A673 (cell line): ENCODE measurements at regions of chr3 and their contacts with region 1.

Region 1: DNA sequence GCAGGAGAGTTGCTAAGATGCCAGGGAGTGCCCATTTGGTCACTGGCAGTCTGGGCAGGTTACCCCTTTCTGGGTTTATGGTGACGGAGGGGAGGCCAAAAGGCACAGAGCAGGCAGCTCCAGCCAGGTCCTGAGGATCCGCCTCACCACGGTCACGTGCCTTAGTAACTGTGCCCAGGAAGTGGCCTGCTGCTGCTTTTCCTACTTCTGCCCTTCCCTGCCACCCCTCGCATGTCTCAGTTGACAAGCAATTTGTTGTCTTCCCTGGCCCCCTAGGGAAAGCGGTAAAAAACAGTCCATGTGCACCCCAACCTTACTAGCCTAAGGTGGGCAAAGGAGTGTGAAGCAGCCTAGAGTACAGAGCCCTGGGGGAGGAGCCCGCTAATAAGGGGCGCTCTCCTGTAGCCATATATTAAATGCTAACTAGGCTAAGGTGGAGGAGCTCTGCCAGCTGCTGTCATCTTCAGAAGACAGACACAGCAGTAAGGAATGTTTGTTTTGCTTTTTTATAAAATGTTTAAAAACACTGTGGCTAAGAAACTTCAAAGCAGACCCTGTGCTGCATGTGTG is 9.1 kb upstream of the LIPH start:
- DNase-seq: no peak
- H3K4me3 ChIP-seq: no peak overlapping the region
- H3K27ac ChIP-seq: no peak overlapping the region
- H3K4me1 ChIP-seq: no peaks in the 10 kb centered on the region
- H3K27me3 ChIP-seq: no peaks in the 10 kb centered on the region
- CTCF ChIP-seq: no peak

Region 2: GRCh38 chr3:185460719-185461350 is 100.6 kb before region 1 on chr3:
- CTCF ChIA-PET with region 1: interaction called, 11 read pairs
- POLR2A ChIA-PET with region 1: no interaction called
- intact Hi-C with region 1: no loop called
- DNase-seq: peak; percentile 56
- H3K4me3 ChIP-seq: no peak overlapping the region
- H3K27ac ChIP-seq: no peak overlapping the region
- H3K4me1 ChIP-seq: no peaks in the 10 kb centered on the region
- H3K27me3 ChIP-seq: no peaks in the 10 kb centered on the region
- CTCF ChIP-seq: peak; percentile 67

Region 3: GRCh38 chr3:185470323-185470722 is 91.1 kb before region 1 on chr3:
- CTCF ChIA-PET with region 1: interaction called, 11 read pairs
- POLR2A ChIA-PET with region 1: no interaction called
- intact Hi-C with region 1: no loop called
- DNase-seq: peak; percentile 24
- H3K4me3 ChIP-seq: no peak overlapping the region
- H3K27ac ChIP-seq: no peak overlapping the region
- H3K4me1 ChIP-seq: no peaks in the 10 kb centered on the region
- H3K27me3 ChIP-seq: no peaks in the 10 kb centered on the region
- CTCF ChIP-seq: no peak

Region 4: DNA sequence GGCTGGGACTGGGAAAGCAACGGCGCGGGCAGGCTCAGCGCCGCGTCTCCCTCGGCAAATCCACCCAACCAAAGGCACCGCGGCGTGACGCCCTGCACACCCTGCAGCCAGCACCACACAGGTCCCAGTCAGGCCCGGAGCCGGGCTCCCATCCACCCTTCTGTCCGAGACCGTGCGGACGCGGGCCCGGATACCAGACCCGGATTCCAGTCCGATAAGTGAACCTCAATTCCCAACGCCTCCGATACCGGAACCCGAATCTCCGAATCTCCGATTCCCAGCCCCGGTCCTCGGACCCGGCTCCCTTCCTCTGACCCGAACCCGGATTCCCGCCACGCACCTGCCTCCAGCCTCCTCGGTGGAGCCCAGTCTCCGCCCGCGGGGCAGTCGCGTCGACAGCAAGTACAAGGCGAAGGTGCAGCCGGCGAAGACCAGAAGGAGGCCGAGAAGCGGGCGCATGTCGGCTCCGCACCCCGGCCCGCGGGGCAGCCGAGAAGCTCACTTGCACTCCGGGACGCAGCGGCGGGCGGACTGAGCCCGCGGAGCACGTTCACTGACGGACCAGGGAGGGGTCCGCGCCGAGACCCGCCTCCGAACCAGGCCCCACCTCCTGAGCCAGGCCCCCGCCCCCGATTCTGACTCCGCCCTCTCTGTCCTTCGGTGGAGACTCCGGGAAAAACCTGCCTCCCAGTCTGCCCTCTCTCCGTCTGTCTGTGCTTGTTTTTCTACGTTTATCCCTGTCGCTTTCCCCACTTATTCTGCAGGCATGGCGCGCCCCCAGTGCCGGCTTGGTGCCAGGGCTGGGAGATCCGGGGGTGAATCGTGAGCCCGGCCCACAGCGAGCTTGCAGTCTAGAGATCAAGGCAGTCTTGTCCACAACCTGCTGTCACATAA is 62.7 kb before region 1 on chr3 and contains the start of gene TMEM41A:
- CTCF ChIA-PET with region 1: no interaction called
- POLR2A ChIA-PET with region 1: no interaction called
- intact Hi-C with region 1: loop called (anchors 1 kb)
- DNase-seq: peak; percentile 95
- H3K4me3 ChIP-seq: peak within 1 kb of the TSS; percentile 84
- H3K27ac ChIP-seq: peak within 1 kb of the TSS; percentile 88
- H3K4me1 ChIP-seq: no peaks in the 10 kb centered on the region
- H3K27me3 ChIP-seq: no peaks in the 10 kb centered on the region
- CTCF ChIP-seq: 0 out of 2 replicates have a peak, but pooled peaks have one; percentile 7
- total RNA-seq, gene TMEM41A: 27.7 and 29.9 TPM in 2 replicates

Region 5: DNA sequence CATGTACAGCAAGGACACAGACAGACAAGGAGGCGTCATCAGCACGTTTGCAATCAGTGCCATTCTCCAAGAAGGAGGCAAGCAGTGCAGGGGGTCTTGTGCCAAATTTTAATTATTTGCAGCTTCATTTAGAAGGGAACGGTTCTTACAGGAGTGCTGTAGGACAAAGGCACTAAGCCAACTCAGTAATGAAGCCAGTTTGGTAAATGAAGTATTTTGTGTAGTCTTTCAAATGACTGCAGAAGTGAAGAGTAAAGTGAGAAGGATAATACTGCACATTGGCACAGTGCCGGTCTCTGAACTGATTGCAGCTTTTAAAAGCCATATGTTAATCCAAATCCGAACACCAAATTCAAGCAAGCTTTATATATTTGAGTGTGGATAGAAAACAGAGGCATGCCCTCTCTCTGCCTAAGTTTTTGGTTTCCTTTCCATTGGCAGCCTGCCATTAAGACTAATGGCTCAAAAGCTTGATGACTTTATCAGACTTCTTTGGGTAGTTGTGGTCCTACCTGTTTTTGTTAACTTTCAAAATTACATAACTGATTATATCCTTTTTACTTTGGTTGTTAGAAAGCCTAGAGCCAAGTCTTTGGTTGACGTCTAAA is 125.9 kb after region 1 on chr3:
- CTCF ChIA-PET with region 1: no interaction called
- POLR2A ChIA-PET with region 1: no interaction called
- intact Hi-C with region 1: no loop called
- DNase-seq: peak; percentile 70
- H3K4me3 ChIP-seq: no peak overlapping the region
- H3K27ac ChIP-seq: peak overlapping the region; percentile 32
- H3K4me1 ChIP-seq: peaks cover 24% of the 10 kb centered on the region
- H3K27me3 ChIP-seq: no peaks in the 10 kb centered on the region
- CTCF ChIP-seq: no peak

Region 6: GRCh38 chr3:185852635-185853034 is 291.2 kb after region 1 on chr3:
- CTCF ChIA-PET with region 1: no interaction called
- POLR2A ChIA-PET with region 1: interaction called, 21 read pairs
- intact Hi-C with region 1: no loop called
- DNase-seq: no peak
- H3K4me3 ChIP-seq: no peak overlapping the region
- H3K27ac ChIP-seq: no peak overlapping the region
- H3K4me1 ChIP-seq: no peaks in the 10 kb centered on the region
- H3K27me3 ChIP-seq: no peaks in the 10 kb centered on the region
- CTCF ChIP-seq: no peak

Region 7: DNA sequence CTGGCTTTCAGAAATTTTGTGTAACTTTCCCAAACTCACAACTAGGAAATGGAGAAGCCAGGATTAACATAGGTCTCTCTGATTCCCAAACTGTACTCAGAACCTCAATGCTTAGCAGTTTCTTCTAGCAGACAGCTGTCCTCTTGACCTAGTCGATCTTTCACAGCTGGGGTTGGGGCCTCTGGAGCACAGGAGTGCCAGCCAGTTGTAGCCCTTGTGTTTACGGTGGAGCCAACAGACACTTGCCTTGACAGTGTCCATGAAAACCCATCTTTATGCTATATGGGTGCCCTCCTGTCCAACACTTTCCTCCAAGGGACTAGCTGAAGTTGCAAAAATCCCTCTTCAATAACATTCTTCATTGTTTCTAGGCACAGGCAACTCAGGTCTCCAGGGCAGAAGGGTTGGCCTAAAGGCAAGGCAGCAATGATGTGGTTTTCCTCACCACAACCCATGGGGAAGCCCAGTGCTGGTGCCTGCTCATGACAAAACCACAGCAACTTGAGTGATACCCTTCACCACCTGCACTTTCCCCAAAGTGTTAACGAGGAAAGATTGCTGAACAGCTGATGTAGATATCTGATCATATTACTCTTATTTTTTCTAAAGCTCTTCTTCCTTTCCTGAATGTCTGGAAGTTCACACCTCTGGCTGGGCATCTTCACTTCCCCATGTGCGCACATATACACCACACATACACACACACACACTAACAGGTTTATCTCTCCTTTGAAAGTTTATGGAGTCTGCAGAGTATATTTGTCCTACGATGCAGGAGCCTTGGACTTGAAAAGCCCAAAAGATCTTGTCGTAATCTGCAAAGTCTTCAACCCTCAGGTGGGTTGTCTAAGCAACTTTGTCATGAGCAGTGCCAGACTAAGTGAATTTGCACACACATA is 1144.7 kb after region 1 on chr3:
- CTCF ChIA-PET with region 1: no interaction called
- POLR2A ChIA-PET with region 1: no interaction called
- intact Hi-C with region 1: no loop called
- DNase-seq: no peak
- H3K4me3 ChIP-seq: no peak overlapping the region
- H3K27ac ChIP-seq: no peak overlapping the region
- H3K4me1 ChIP-seq: no peaks in the 10 kb centered on the region
- H3K27me3 ChIP-seq: no peaks in the 10 kb centered on the region
- CTCF ChIP-seq: no peak